ENCODE measurements at regions of chr18 and their contacts with region 1.

Region 1: DNA sequence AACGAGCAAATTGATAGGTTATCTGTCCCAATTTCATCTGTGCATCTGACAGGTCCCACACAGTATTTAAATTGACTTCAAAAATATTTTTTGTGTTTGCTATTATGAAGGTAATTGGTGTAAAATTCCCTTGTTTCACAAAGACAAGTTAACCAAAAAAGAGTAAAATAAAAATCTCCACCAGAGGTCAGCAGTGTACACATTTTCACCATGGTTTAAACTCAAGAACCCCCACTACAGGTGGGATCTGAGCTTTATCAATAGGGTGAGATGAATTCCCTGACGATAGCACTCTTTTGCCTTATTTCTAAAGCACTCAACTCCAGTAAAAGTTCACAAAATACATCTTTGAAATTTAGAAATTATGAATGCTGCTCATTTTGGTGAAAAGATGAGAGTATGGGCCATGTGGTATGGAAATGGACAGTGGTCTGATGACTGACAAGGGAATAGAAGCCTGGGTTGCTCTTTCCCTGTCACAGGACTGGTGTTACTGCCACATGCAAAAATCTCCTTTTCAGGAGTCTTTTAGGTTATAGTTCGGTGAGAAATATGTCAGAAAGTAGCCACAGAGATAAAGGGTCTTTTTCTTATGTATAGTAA is 68.0 kb downstream of the SERPINB8 start:
- DNase-seq: no peak
- ATAC-seq: no peak
- H3K4me3 Mint-ChIP-seq: no peak overlapping the region
- H3K27ac Mint-ChIP-seq: no peak overlapping the region
- H3K4me1 Mint-ChIP-seq: no peaks in the 10 kb centered on the region
- H3K27me3 Mint-ChIP-seq: peaks cover 3% of the 10 kb centered on the region

Region 2: DNA sequence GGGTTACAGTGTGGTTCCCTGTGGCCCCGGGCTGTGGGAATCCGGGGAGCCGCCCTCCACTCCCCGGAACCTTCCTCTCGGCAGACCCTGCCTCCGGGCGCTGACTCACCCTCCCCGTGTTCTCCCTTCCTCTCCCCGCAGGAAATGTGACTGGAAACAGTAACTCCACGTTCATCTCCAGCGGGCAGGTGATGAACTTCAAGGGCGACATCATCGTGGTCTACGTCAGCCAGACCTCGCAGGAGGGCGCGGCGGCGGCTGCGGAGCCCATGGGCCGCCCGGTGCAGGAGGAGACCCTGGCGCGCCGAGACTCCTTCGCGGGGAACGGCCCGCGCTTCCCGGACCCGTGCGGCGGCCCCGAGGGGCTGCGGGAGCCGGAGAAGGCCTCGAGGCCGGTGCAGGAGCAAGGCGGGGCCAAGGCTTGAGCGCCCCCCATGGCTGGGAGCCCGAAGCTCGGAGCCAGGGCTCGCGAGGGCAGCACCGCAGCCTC is 1653.3 kb before region 1 on chr18:
- CTCF ChIA-PET with region 1: no interaction called
- POLR2A ChIA-PET with region 1: no interaction called
- intact Hi-C with region 1: no loop called
- DNase-seq: no peak
- ATAC-seq: no peak
- H3K4me3 Mint-ChIP-seq: no peak overlapping the region
- H3K27ac Mint-ChIP-seq: no peak overlapping the region
- H3K4me1 Mint-ChIP-seq: no peaks in the 10 kb centered on the region
- H3K27me3 Mint-ChIP-seq: no peaks in the 10 kb centered on the region

Region 3: DNA sequence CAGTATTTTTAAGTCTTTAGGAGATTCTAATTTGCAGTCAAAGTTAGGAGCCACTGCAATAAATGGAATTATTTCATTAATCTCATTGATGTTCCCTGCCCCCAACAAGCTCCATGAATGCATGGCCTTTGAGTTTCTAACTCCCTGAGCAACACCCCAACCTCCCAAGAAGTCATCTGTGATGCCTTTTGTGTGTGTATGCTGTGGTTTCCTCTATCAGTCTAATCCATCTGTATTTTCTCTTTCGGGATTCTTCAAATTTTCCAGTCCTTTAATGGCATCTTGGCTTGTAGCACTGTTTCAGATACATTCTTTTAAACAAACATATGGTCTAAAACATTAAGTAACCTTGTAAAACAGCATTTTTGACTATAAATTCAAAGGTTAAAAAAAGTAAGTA is 113.4 kb before region 1 on chr18:
- CTCF ChIA-PET with region 1: no interaction called
- POLR2A ChIA-PET with region 1: no interaction called
- intact Hi-C with region 1: no loop called
- DNase-seq: no peak
- ATAC-seq: no peak
- H3K4me3 Mint-ChIP-seq: no peak overlapping the region
- H3K27ac Mint-ChIP-seq: no peak overlapping the region
- H3K4me1 Mint-ChIP-seq: no peaks in the 10 kb centered on the region
- H3K27me3 Mint-ChIP-seq: peaks cover 31% of the 10 kb centered on the region

Region 4: GRCh38 chr18:64409511-64409910 is 371.6 kb after region 1 on chr18:
- CTCF ChIA-PET with region 1: interaction called, 5 read pairs
- POLR2A ChIA-PET with region 1: no interaction called
- intact Hi-C with region 1: loop called in 1 of 2 experiments (anchors 1 kb)
- DNase-seq: no peak
- ATAC-seq: no peak
- H3K4me3 Mint-ChIP-seq: no peak overlapping the region
- H3K27ac Mint-ChIP-seq: no peak overlapping the region
- H3K4me1 Mint-ChIP-seq: no peaks in the 10 kb centered on the region
- H3K27me3 Mint-ChIP-seq: no peaks in the 10 kb centered on the region

Region 5: GRCh38 chr18:65091744-65092329 is 1053.9 kb after region 1 on chr18:
- CTCF ChIA-PET with region 1: no interaction called
- POLR2A ChIA-PET with region 1: no interaction called
- intact Hi-C with region 1: loop called in 1 of 2 experiments (anchors 10 kb)
- DNase-seq: no peak
- ATAC-seq: no peak
- H3K4me3 Mint-ChIP-seq: no peak overlapping the region
- H3K27ac Mint-ChIP-seq: no peak overlapping the region
- H3K4me1 Mint-ChIP-seq: no peaks in the 10 kb centered on the region
- H3K27me3 Mint-ChIP-seq: no peaks in the 10 kb centered on the region

Region 6: GRCh38 chr18:65753520-65753919 is 1715.6 kb after region 1 on chr18:
- CTCF ChIA-PET with region 1: no interaction called
- POLR2A ChIA-PET with region 1: no interaction called
- intact Hi-C with region 1: loop called in 1 of 2 experiments (anchors 10 kb)
- DNase-seq: no peak
- ATAC-seq: no peak
- H3K4me3 Mint-ChIP-seq: no peak overlapping the region
- H3K27ac Mint-ChIP-seq: no peak overlapping the region
- H3K4me1 Mint-ChIP-seq: no peaks in the 10 kb centered on the region
- H3K27me3 Mint-ChIP-seq: peaks cover 15% of the 10 kb centered on the region

Measured in activated CD4-positive, alpha-beta T cell treated with anti-CD3 and anti-CD28 coated beads for 36 hours (primary cell).